ENCODE measurements at regions of chr1 and their contacts with region 1.

Region 1: DNA sequence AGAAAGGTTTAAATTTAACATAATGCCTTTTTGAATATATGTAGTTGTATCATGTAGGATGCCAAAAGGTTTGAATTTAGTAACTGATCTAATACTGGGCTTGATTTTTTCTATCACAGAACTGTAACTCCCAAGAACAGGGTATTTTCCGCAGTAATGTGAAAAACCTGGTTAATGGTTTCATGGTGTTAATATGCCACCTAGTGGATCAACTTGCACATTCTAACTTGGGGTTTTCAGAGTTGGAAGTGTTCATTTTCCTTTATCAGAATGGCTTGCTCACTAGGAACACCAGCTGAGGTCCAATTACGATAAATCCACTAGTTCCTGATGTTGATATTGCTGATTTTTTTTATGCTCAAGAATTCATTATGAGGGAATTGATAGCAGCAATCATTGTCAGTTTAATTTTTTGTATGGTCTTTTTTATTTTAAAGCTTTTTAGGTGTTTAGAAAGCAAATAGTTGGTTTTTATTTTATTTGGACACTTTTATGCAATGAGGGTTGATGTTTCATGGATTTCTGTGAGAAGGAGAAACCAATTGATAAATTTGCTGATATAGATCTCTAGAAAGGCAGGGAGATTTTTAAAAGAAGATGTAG is 157.2 kb downstream of the PLA2G4A start:
- DNase-seq: peak; percentile 38
- ATAC-seq: peak; percentile 71
- H3K4me3 ChIP-seq: no peak overlapping the region
- H3K27ac ChIP-seq: no peak overlapping the region
- H3K4me1 ChIP-seq: no peaks in the 10 kb centered on the region
- H3K27me3 ChIP-seq: no peaks in the 10 kb centered on the region
- CTCF ChIP-seq: peak; percentile 49 to 77 (median 69)
- POLR2A ChIP-seq: no peak
- RAD21 ChIP-seq: peak; percentile 91

Region 2: GRCh38 chr1:186375088-186375953 is 610.7 kb before region 1 on chr1 and contains the starts of genes ODR4 and TPR:
- CTCF ChIA-PET with region 1: interaction called, 5 read pairs
- POLR2A ChIA-PET with region 1: no interaction called
- RAD21 ChIA-PET with region 1: interaction called in 1 of 2 experiments, 4 read pairs
- intact Hi-C with region 1: loop called (anchors 1 kb)
- DNase-seq: peak; percentile 100
- ATAC-seq: peak; percentile 91
- H3K4me3 ChIP-seq: peak within 1 kb of the TSS; percentile 94 to 96
- H3K27ac ChIP-seq: peak within 1 kb of the TSS; percentile 87
- H3K4me1 ChIP-seq: peaks cover 5 to 20% of the 10 kb centered on the region in 2 experiments; a peak in 3 of 4 replicates
- H3K27me3 ChIP-seq: no peaks in the 10 kb centered on the region
- CTCF ChIP-seq: peak; percentile 87 to 99 (median 96)
- POLR2A ChIP-seq: peak; percentile 58
- RAD21 ChIP-seq: peak; percentile 39; the same call in 1 of the 2 replicates
- total RNA-seq, gene ODR4: 18.4 TPM
- total RNA-seq, gene TPR: 131 TPM

Region 3: GRCh38 chr1:186404454-186405051 is 581.4 kb before region 1 on chr1:
- CTCF ChIA-PET with region 1: no interaction called
- POLR2A ChIA-PET with region 1: no interaction called
- RAD21 ChIA-PET with region 1: no interaction called
- intact Hi-C with region 1: loop called (anchors 2 kb)
- DNase-seq: no peak
- ATAC-seq: no peak
- H3K4me3 ChIP-seq: no peak overlapping the region
- H3K27ac ChIP-seq: no peak overlapping the region
- H3K4me1 ChIP-seq: no peaks in the 10 kb centered on the region
- H3K27me3 ChIP-seq: no peaks in the 10 kb centered on the region
- CTCF ChIP-seq: peak; percentile 28 to 72 (median 68); a peak in 5 of 6 replicates
- POLR2A ChIP-seq: no peak
- RAD21 ChIP-seq: peak; percentile 38; the same call in 1 of the 2 replicates

Region 4: DNA sequence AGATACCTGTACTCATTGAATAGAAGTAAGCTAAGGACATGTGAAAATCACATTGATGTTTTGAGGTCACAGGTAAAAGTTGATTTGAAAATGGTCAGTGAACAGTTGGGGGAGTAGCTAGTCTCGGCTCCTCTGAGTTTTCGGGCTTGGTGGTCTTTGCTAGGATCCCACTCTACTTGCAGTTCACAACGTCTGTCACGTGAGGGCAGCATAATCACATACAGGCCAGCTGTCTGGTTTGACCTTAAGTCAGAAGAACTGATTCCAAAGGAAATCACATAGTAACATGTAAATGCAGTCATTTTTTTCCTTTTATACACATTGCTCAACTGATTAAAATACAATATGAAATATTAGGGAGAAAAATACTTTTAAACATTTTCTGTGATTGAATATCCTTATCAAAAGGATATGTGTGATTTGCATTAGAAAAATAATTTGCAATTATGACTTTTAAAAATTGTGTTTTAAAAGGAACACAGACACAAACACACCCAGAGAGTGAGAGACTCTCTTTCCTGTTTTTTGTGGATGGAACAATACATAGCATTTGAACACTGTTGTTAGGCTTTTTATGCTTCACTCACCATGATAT is 503.2 kb before region 1 on chr1:
- CTCF ChIA-PET with region 1: interaction called, 10 read pairs
- POLR2A ChIA-PET with region 1: no interaction called
- RAD21 ChIA-PET with region 1: no interaction called
- intact Hi-C with region 1: loop called (anchors 1 kb)
- DNase-seq: peak; percentile 59
- ATAC-seq: peak; percentile 91
- H3K4me3 ChIP-seq: no peak overlapping the region
- H3K27ac ChIP-seq: no peak overlapping the region
- H3K4me1 ChIP-seq: no peaks in the 10 kb centered on the region
- H3K27me3 ChIP-seq: no peaks in the 10 kb centered on the region
- CTCF ChIP-seq: peak; percentile 64 to 94 (median 82); a peak in 5 of 6 replicates
- POLR2A ChIP-seq: no peak
- RAD21 ChIP-seq: peak; percentile 93

Region 5: GRCh38 chr1:186605762-186606350 is 380.1 kb before region 1 on chr1:
- CTCF ChIA-PET with region 1: interaction called, 20 read pairs
- POLR2A ChIA-PET with region 1: no interaction called
- RAD21 ChIA-PET with region 1: interaction called in 1 of 2 experiments, 3 read pairs
- intact Hi-C with region 1: loop called (anchors 1 kb)
- DNase-seq: peak; percentile 56
- ATAC-seq: peak; percentile 95
- H3K4me3 ChIP-seq: no peak overlapping the region
- H3K27ac ChIP-seq: no peak overlapping the region
- H3K4me1 ChIP-seq: no peaks in the 10 kb centered on the region
- H3K27me3 ChIP-seq: no peaks in the 10 kb centered on the region
- CTCF ChIP-seq: peak; percentile 67 to 89 (median 82); a peak in 5 of 6 replicates
- POLR2A ChIP-seq: no peak
- RAD21 ChIP-seq: peak; percentile 91

Region 6: GRCh38 chr1:186915555-186915954 is 70.4 kb before region 1 on chr1:
- CTCF ChIA-PET with region 1: interaction called, 3 read pairs
- POLR2A ChIA-PET with region 1: no interaction called
- RAD21 ChIA-PET with region 1: no interaction called
- intact Hi-C with region 1: loop called (anchors 5 kb)
- DNase-seq: no peak
- ATAC-seq: no peak
- H3K4me3 ChIP-seq: no peak overlapping the region
- H3K27ac ChIP-seq: no peak overlapping the region
- H3K4me1 ChIP-seq: no peaks in the 10 kb centered on the region
- H3K27me3 ChIP-seq: no peaks in the 10 kb centered on the region
- CTCF ChIP-seq: no peak
- POLR2A ChIP-seq: no peak
- RAD21 ChIP-seq: peak; percentile 36; the same call in 1 of the 2 replicates